T-cell (primary cell): ENCODE measurements at regions of chr4 and their contacts with region 1.

Region 1: GRCh38 chr4:7831330-7831729 is 108.3 kb downstream of the AFAP1 start:
- DNase-seq: peak in 4 of 35 experiments; percentile 7 to 62 (median 28)
- ATAC-seq: peak in 3 of 4 experiments; percentile 37 to 54 (median 43)
- H3K4me3 ChIP-seq: no peak overlapping the region
- H3K4me3 Mint-ChIP-seq: peak overlapping the region; percentile 50 to 72 (median 65)
- H3K27ac ChIP-seq: peak overlapping the region; percentile 50
- H3K27ac Mint-ChIP-seq: peak overlapping the region; percentile 91 to 93
- H3K4me1 ChIP-seq: peaks cover 6 to 40% of the 10 kb centered on the region in 2 experiments
- H3K4me1 Mint-ChIP-seq: peaks cover 21 to 66% (median 58%) of the 10 kb centered on the region in 3 donors
- H3K27me3 ChIP-seq: no peaks in the 10 kb centered on the region
- H3K27me3 Mint-ChIP-seq: no peaks in the 10 kb centered on the region

Region 2: DNA sequence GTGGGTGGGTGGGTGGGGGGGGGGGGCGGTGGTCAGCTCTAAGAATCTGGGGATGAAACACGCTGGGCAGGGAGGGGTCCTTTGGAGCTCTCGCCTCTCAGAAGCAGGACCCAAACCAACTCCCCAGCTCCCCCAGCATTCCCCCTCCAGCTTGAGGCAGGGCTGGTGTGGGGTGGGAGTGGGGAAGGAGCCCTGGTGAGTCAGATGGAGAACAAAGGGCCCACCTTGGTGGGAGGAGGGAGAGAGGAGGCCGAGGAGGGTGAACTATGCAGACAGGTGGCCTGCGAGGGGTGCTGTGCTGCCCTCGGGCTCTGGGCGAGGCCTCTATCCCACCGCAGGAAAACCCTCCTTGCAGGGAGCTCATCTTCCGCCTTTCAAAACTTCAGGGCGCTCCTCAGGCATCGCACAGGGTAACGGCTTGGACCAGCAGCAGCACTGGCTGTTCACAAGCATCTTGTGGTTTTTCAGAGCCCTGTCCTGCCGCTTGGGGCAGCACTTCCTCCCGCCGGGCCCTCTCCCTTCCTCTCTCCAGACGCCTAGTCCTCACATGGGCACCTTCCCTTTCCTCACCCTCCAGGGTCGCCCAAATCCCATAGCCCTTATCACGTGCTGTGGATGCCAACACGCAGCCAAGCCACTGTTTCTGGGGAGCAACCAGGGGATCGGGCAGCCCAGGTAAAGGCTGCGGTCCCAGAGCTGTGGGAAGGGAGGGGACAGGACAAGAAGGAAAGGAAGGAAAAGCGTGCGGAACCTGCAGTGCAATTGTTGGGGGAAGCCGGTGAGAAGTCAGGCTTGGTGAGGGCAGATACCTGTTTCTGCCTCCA is 729.4 kb before region 1 on chr4:
- CTCF ChIA-PET with region 1: no interaction called
- POLR2A ChIA-PET with region 1: no interaction called
- DNase-seq: peak in 31 of 35 experiments; percentile 8 to 65 (median 36)
- ATAC-seq: peak; percentile 46 to 55 (median 51)
- H3K4me3 ChIP-seq: peak overlapping the region; percentile 21 to 84
- H3K4me3 Mint-ChIP-seq: peak overlapping the region; percentile 86 to 89 (median 89)
- H3K27ac ChIP-seq: no peak overlapping the region
- H3K27ac Mint-ChIP-seq: peak overlapping the region; percentile 14 to 55
- H3K4me1 ChIP-seq: peaks cover 8 to 27% of the 10 kb centered on the region in 2 experiments
- H3K4me1 Mint-ChIP-seq: peaks cover 15 to 27% (median 21%) of the 10 kb centered on the region in 3 donors
- H3K27me3 ChIP-seq: peaks cover 0 to 13% of the 10 kb centered on the region in 2 experiments
- H3K27me3 Mint-ChIP-seq: peaks cover 0 to under 1% of the 10 kb centered on the region in 2 donors

Region 3: DNA sequence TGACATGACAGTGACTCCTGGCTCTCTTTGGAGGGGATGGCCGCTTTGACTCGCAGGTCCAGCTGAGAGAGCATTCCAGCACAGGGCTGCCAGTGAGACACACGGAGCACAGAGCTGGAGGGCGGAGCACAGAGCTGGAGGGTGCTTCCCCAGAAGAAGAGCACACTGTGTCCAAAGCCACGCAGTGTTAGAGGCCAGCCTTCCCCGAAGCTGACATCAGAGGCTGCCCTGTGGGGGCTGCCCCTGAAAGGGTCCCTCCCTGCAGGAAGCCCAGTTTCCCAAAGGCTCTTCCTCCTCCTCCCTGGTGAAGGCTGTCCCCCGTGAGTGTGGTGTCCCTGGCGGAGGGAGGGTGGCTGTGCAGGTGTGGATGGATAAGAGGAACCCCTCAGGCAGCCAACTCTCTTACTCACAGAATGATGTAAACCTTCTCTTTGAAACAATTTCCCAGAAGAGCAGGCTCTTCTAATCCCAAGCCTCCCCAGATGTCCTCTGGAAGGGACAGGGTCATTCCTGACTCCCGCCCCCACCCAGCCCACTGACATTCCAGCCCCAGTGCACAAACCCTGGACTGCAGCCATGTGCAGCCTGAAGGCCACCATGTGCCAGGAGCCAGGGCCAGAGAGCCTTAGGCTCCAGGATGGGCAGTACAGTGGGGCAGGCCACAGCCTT is 450.0 kb before region 1 on chr4:
- CTCF ChIA-PET with region 1: no interaction called
- POLR2A ChIA-PET with region 1: no interaction called
- DNase-seq: no peak
- ATAC-seq: no peak
- H3K4me3 ChIP-seq: no peak overlapping the region
- H3K4me3 Mint-ChIP-seq: no peak overlapping the region
- H3K27ac ChIP-seq: no peak overlapping the region
- H3K27ac Mint-ChIP-seq: no peak overlapping the region
- H3K4me1 ChIP-seq: no peaks in the 10 kb centered on the region
- H3K4me1 Mint-ChIP-seq: no peaks in the 10 kb centered on the region
- H3K27me3 ChIP-seq: peaks cover 0 to 39% of the 10 kb centered on the region in 2 experiments
- H3K27me3 Mint-ChIP-seq: peaks cover 15 to 39% of the 10 kb centered on the region in 2 donors

Region 4: GRCh38 chr4:7843831-7844593 is 12.7 kb after region 1 on chr4:
- CTCF ChIA-PET with region 1: interaction called, 8 to 16 read pairs
- POLR2A ChIA-PET with region 1: interaction called in 1 of 2 experiments, 3 read pairs
- DNase-seq: peak in 33 of 35 experiments; percentile 19 to 81 (median 50)
- ATAC-seq: peak; percentile 68 to 91 (median 84)
- H3K4me3 ChIP-seq: no peak overlapping the region
- H3K4me3 Mint-ChIP-seq: peak overlapping the region in 1 of 3 donors; percentile 15
- H3K27ac ChIP-seq: no peak overlapping the region
- H3K27ac Mint-ChIP-seq: peak overlapping the region; percentile 53 to 69
- H3K4me1 ChIP-seq: peaks cover 0 to 19% of the 10 kb centered on the region in 2 experiments
- H3K4me1 Mint-ChIP-seq: peaks cover 13 to 41% (median 24%) of the 10 kb centered on the region in 3 donors
- H3K27me3 ChIP-seq: no peaks in the 10 kb centered on the region
- H3K27me3 Mint-ChIP-seq: peaks cover 0 to 5% of the 10 kb centered on the region in 2 donors